Activated B cell treated with CpG ODN at 0.5 μM for 24 hours (primary cell): ENCODE measurements at regions of chr6 and their contacts with region 1.

Region 1: DNA sequence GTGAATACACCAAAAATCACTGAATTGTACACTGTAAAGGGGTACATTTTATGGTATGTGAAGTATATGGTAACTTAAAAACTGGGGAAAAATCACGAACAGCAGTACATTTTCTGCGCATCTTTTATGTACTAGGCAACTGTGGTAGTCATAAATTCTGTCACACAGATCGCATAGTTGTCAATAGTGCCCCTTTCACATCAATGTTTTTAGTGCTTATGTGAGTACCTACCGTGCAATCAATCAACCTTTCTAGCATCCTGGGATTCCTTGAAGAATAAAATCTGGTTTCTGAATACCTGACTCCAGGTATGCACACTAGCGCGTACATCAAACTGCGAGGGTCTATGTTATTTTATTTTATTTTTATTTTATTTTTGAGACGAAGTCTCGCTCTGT is 637 bp upstream of the RPF2 start:
- DNase-seq: no peak
- ATAC-seq: no peak
- H3K4me3 Mint-ChIP-seq: peak overlapping the region; percentile 95
- H3K27ac Mint-ChIP-seq: peak overlapping the region; percentile 98
- H3K4me1 Mint-ChIP-seq: peaks cover 37% of the 10 kb centered on the region
- H3K27me3 Mint-ChIP-seq: no peaks in the 10 kb centered on the region
- CTCF ChIP-seq: no peak

Region 2: GRCh38 chr6:110201151-110201884 is 779.9 kb before region 1 on chr6:
- CTCF ChIA-PET with region 1: no interaction called
- POLR2A ChIA-PET with region 1: no interaction called
- intact Hi-C with region 1: loop called (anchors 10 kb)
- DNase-seq: no peak
- ATAC-seq: no peak
- H3K4me3 Mint-ChIP-seq: no peak overlapping the region
- H3K27ac Mint-ChIP-seq: peak overlapping the region; percentile 63
- H3K4me1 Mint-ChIP-seq: peaks cover 65% of the 10 kb centered on the region
- H3K27me3 Mint-ChIP-seq: no peaks in the 10 kb centered on the region
- CTCF ChIP-seq: no peak

Region 3: DNA sequence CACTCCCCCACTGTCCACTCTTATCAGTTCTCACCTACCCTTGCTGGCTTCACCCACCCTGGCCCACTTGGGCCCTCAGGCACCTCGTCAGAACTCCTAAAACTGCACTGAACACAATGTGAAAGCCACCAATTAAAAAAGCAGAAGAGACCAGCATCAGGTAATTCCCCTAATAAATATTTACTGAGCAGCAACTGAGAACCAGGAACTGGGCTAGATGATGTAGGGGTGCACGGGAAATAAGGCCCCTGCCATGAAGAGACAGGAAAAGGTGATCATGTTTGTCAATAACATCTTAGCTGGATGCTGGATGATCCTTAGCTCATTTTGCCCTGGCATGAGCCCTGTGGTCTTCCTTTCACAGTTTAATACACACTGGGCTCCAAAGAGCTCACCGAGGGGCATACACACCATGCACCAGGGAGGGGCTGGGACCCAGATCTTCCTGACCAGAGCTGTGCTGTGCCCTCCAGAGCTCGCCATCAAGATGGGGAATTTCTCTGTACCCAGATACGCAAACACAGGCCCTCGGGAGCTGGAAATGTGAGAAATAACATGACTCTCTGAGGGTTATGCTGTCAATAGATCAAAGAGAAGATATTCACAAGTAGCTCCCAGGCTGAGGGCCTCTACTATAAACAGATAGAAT is 391.2 kb before region 1 on chr6:
- CTCF ChIA-PET with region 1: no interaction called
- POLR2A ChIA-PET with region 1: no interaction called
- intact Hi-C with region 1: loop called (anchors 5 kb)
- DNase-seq: peak; percentile 24
- ATAC-seq: peak; percentile 98
- H3K4me3 Mint-ChIP-seq: peak overlapping the region; percentile 15
- H3K27ac Mint-ChIP-seq: peak overlapping the region; percentile 92
- H3K4me1 Mint-ChIP-seq: peaks cover 20% of the 10 kb centered on the region
- H3K27me3 Mint-ChIP-seq: no peaks in the 10 kb centered on the region
- CTCF ChIP-seq: no peak

Region 4: DNA sequence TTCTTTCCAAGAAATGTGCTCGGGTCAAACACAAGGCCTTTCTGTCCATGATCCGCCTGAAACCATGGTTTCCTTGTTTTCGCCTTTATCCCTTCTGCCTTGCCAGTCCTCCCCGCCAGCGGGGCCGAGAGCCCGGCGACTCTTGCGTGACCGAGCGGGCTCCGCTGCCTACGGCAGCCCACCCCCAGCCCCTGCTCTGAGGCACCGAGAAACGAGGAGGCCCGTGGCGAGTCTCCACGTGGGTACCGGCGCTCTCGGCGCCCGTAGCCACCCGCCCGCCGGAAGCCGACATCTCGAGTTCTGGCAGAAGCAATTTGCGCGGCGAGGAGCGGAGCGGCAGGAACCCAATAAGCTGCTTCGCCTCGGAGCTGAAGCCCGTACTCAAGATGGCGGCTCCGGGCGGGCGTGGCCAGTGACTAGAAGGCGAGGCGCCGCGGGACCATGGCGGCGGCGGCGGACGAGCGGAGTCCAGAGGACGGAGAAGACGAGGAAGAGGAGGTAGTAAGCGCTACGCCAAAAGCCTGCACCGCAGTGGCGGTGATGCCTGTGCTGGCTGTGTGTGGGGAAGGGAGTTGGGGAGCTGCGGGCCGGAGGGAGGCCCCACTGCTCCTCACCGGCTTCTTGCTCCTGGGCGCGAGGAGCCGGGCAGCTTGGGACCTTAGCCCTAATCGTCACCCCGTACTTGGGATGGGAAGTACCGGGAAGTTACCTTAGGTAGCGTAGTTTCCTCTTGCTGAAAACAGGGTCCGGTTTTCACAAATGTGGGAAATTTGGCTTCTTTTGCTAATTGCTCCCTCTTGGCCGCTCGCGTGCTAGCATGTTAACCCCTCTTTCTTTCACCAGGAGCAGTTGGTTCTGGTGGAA is 22.6 kb before region 1 on chr6 and contains the start of gene GTF3C6:
- CTCF ChIA-PET with region 1: interaction called, 3 read pairs
- POLR2A ChIA-PET with region 1: interaction called, 39 read pairs
- intact Hi-C with region 1: loop called (anchors 1 kb)
- DNase-seq: peak; percentile 87
- ATAC-seq: peak; percentile 98
- H3K4me3 Mint-ChIP-seq: peak within 1 kb of the TSS; percentile 97
- H3K27ac Mint-ChIP-seq: peak within 1 kb of the TSS; percentile 98
- H3K4me1 Mint-ChIP-seq: peaks cover 19% of the 10 kb centered on the region
- H3K27me3 Mint-ChIP-seq: no peaks in the 10 kb centered on the region
- CTCF ChIP-seq: no peak
- total RNA-seq, gene GTF3C6: 76.7 and 93.3 TPM in 2 replicates

Region 5: DNA sequence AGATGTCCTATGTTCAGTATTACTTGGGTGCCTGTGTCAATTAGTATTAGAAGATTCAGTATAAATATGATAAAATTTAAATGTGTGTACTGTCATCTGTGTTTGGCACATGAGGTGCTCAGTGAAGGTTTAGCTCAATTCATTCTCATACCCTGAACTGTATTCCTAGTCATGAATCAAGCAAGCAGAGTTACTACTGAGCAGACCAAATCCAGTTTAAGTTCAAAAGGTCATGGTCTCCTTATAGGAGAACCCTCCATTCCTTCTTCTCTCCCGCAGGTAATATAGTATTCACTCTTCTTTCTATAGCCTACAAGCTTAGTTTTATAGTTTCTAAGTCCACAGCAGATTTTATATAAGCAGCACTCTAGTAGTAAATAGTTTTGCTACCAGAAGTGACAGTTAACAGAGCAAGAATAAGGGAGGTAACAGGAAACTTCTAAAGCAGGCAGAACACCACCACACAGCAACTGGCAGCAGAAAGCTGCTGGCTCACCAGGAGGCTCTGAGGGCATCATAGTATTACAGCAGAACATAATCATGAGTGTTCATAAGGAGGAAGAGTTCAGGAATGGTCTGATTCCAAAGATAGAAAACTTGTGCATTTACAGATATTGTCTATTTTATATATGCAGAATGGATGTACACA is 239.3 kb after region 1 on chr6:
- CTCF ChIA-PET with region 1: no interaction called
- POLR2A ChIA-PET with region 1: no interaction called
- intact Hi-C with region 1: no loop called
- DNase-seq: no peak
- ATAC-seq: no peak
- H3K4me3 Mint-ChIP-seq: no peak overlapping the region
- H3K27ac Mint-ChIP-seq: no peak overlapping the region
- H3K4me1 Mint-ChIP-seq: no peaks in the 10 kb centered on the region
- H3K27me3 Mint-ChIP-seq: no peaks in the 10 kb centered on the region
- CTCF ChIP-seq: no peak